GM12878 (cell line): ENCODE measurements at regions of chr1 and their contacts with region 1.

Region 1: GRCh38 chr1:114716304-114717170 is at the start of gene NRAS:
- DNase-seq: peak; percentile 56
- ATAC-seq: peak; percentile 96
- H3K4me3 ChIP-seq: peak within 1 kb of the TSS; percentile 93
- H3K27ac ChIP-seq: peak within 1 kb of the TSS; percentile 98
- H3K4me1 ChIP-seq: no peaks in the 10 kb centered on the region
- H3K27me3 ChIP-seq: no peaks in the 10 kb centered on the region
- CTCF ChIP-seq: no peak
- EP300 ChIP-seq: peak in 1 of 2 experiments; percentile 30; a peak in 1 of 4 replicates
- POLR2A ChIP-seq: peak; percentile 85
- RAD21 ChIP-seq: no peak
- polyA plus RNA-seq, gene NRAS: 31.7 to 33.0 TPM

Region 2: GRCh38 chr1:114648502-114648901 is 68.0 kb before region 1 on chr1:
- CTCF ChIA-PET with region 1: no interaction called
- POLR2A ChIA-PET with region 1: no interaction called
- RAD21 ChIA-PET with region 1: no interaction called
- SMC1A ChIA-PET with region 1: no interaction called
- in situ Hi-C with region 1: no loop called
- intact Hi-C with region 1: no loop called
- DNase-seq: no peak
- ATAC-seq: no peak
- H3K4me3 ChIP-seq: no peak overlapping the region
- H3K27ac ChIP-seq: no peak overlapping the region
- H3K4me1 ChIP-seq: no peaks in the 10 kb centered on the region
- H3K27me3 ChIP-seq: no peaks in the 10 kb centered on the region; a peak in 1 of 4 replicates
- CTCF ChIP-seq: 0 out of 6 replicates have a peak, but pooled peaks of 1 of the 3 experiments have one; percentile 0
- EP300 ChIP-seq: no peak
- POLR2A ChIP-seq: no peak
- RAD21 ChIP-seq: no peak

Region 3: DNA sequence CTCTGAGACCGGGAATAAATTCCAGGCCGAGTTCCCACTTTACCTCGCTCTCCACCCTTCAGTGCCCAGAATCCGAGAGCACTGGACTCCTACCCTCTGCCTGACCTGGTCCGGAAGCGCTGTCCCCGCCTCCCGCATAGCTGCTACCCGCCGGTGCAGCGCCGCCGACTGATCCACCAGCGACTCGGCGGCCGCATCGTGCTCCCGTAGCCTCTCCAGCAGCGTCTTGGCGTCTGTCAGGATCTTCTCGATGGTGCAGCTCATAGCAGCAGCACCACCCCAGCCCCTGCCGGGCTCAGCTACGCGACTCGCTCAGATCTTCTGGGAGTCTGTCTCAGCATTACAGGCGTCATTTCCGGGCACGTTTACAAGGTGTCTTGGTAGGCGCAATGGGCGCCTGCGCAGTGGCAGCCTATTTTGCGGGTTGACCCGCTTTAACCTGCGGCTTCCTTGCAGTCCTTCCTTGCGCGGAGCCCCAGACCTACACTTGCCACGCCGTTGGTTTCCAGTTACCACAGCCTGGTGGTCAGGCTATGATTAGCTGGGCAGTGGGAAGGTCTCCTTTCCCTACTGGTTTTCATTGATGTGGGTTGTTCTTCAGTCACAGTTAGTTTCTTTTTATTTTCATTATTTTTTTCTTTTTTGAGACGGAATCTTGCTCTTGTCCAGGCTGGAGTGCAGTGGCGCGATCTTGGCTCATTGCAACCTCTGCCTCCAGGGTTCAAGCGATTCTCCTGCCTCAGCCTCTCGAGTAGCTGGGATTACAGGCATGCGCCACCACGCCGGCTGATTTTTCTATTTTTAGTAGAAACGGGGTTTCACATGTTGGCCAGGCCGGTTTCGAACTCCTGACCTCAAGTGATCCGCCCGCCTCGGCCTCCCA is 64.0 kb after region 1 on chr1 and contains the start of gene SIKE1:
- CTCF ChIA-PET with region 1: no interaction called
- POLR2A ChIA-PET with region 1: interaction called, 15 read pairs
- RAD21 ChIA-PET with region 1: interaction called, 4 read pairs
- SMC1A ChIA-PET with region 1: interaction called, 12 read pairs
- in situ Hi-C with region 1: no loop called
- intact Hi-C with region 1: no loop called
- DNase-seq: peak; percentile 80
- ATAC-seq: peak; percentile 100
- H3K4me3 ChIP-seq: peak within 1 kb of the TSS; percentile 87
- H3K27ac ChIP-seq: peak within 1 kb of the TSS; percentile 91
- H3K4me1 ChIP-seq: no peaks in the 10 kb centered on the region; the same call in 1 of the 2 replicates
- H3K27me3 ChIP-seq: no peaks in the 10 kb centered on the region
- CTCF ChIP-seq: peak in 1 of 3 experiments; percentile 12; a peak in 1 of 6 replicates
- EP300 ChIP-seq: no peak
- POLR2A ChIP-seq: peak; percentile 99
- RAD21 ChIP-seq: no peak
- polyA plus RNA-seq, gene SIKE1: 10.4 to 12.8 TPM

Region 4: DNA sequence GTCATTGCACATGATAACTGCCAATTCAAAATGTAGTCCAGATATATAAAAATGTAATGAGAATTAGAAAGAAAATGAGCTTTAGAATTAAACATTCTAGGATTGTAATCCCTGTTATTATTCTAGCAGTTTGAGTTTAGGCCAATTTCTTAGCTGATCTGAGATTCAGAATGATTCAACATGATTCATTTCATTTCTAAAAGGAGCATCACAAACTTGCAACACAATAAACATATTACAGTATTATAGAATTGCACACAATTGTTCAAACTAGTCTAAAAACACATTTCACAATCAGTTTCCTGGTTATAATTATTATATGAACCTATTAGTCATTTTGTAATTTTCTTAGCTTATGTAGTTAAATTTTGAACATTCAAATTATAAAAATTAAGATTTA is 269.7 kb after region 1 on chr1:
- CTCF ChIA-PET with region 1: no interaction called
- POLR2A ChIA-PET with region 1: no interaction called
- RAD21 ChIA-PET with region 1: no interaction called
- SMC1A ChIA-PET with region 1: no interaction called
- in situ Hi-C with region 1: no loop called
- intact Hi-C with region 1: no loop called
- DNase-seq: no peak
- ATAC-seq: no peak
- H3K4me3 ChIP-seq: no peak overlapping the region
- H3K27ac ChIP-seq: no peak overlapping the region
- H3K4me1 ChIP-seq: no peaks in the 10 kb centered on the region
- H3K27me3 ChIP-seq: no peaks in the 10 kb centered on the region
- CTCF ChIP-seq: no peak
- EP300 ChIP-seq: no peak
- POLR2A ChIP-seq: no peak
- RAD21 ChIP-seq: no peak